ENCODE measurements at regions of chr12 and their contacts with region 1.

Region 1: DNA sequence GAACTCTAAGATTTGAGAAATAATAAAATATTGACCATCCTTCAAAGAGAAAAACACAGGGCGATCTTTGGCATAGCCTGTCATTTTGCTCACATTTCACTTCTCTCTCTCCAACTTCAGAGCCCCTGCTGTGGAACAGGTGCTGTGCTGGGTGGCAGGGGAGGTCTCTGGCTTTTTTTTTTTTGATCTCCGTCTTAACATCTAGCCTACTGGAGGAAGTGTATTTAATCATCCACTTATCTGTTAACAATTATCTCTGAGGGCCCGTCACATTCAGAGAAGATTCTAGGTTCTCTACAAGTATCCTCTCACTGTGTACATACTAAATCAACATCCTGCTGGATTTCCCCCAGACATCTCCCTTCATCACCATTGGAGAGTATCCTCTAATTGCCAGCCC is 34.1 kb downstream of the CHST11 start:
- DNase-seq: no peak
- ATAC-seq: peak; percentile 35
- H3K4me3 ChIP-seq: no peak overlapping the region
- H3K4me3 Mint-ChIP-seq: peak overlapping the region; percentile 56
- H3K27ac ChIP-seq: peak overlapping the region in 1 of 2 donors; percentile 33
- H3K27ac Mint-ChIP-seq: peak overlapping the region; percentile 57
- H3K4me1 ChIP-seq: peaks cover 59 to 72% of the 10 kb centered on the region in 2 donors
- H3K4me1 Mint-ChIP-seq: peaks cover 84% of the 10 kb centered on the region
- H3K27me3 ChIP-seq: no peaks in the 10 kb centered on the region
- H3K27me3 Mint-ChIP-seq: no peaks in the 10 kb centered on the region
- CTCF ChIP-seq: no peak

Region 2: DNA sequence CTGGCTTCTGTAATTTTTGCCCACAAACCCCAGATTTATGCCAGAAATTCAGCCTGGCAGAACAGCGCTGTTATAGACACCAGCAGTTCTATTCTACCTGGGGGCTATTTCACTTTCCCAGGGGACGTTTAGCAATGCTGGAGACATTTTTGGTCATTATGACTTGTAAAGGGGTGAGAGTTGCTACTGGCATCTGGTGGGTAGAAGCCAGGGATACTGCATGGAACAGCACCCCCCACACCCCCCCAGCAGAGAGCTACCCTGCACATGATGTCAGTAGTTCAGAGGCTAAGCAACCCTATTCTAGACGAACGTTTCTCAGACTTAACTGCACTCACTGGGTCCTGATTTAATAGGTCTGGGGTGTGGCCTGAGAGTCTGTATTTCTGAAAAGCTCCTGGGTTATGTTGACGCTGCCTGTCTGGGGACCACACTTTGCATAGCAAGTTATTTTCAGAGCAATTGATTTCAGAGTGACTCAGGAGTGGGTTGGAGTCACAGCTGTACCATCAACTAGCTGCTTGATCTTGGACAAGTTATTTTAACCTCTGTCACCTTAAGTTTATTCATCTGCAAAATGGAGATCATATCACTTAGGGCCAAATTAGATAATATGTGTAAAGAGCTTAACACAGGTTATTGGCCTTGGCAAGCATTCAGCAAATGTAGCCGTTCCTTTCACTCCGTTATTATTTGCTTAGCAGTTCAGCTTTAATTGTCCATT is 14.4 kb after region 1 on chr12:
- CTCF ChIA-PET with region 1: interaction called, 3 read pairs
- POLR2A ChIA-PET with region 1: interaction called, 3 read pairs
- intact Hi-C with region 1: loop called (anchors 2 kb)
- DNase-seq: peak; percentile 53
- ATAC-seq: peak; percentile 88
- H3K4me3 ChIP-seq: no peak overlapping the region
- H3K4me3 Mint-ChIP-seq: peak overlapping the region; percentile 70
- H3K27ac ChIP-seq: no peak overlapping the region
- H3K27ac Mint-ChIP-seq: peak overlapping the region; percentile 3
- H3K4me1 ChIP-seq: peaks cover 83 to 85% of the 10 kb centered on the region in 2 donors
- H3K4me1 Mint-ChIP-seq: peaks cover 97% of the 10 kb centered on the region
- H3K27me3 ChIP-seq: no peaks in the 10 kb centered on the region
- H3K27me3 Mint-ChIP-seq: no peaks in the 10 kb centered on the region
- CTCF ChIP-seq: no peak

Measured in B cell (primary cell).